Activated naive CD4-positive, alpha-beta T cell treated with anti-CD3 and anti-CD28 coated beads for 36 hours (primary cell): ENCODE measurements at regions of chr11 and their contacts with region 1.

Region 1: GRCh38 chr11:269146-269890 is 8.9 kb upstream of the NLRP6 start:
- DNase-seq: peak; percentile 80
- H3K4me3 Mint-ChIP-seq: peak overlapping the region; percentile 89
- H3K27ac Mint-ChIP-seq: peak overlapping the region; percentile 99
- H3K4me1 Mint-ChIP-seq: peaks cover 36% of the 10 kb centered on the region
- H3K27me3 Mint-ChIP-seq: no peaks in the 10 kb centered on the region

Region 2: DNA sequence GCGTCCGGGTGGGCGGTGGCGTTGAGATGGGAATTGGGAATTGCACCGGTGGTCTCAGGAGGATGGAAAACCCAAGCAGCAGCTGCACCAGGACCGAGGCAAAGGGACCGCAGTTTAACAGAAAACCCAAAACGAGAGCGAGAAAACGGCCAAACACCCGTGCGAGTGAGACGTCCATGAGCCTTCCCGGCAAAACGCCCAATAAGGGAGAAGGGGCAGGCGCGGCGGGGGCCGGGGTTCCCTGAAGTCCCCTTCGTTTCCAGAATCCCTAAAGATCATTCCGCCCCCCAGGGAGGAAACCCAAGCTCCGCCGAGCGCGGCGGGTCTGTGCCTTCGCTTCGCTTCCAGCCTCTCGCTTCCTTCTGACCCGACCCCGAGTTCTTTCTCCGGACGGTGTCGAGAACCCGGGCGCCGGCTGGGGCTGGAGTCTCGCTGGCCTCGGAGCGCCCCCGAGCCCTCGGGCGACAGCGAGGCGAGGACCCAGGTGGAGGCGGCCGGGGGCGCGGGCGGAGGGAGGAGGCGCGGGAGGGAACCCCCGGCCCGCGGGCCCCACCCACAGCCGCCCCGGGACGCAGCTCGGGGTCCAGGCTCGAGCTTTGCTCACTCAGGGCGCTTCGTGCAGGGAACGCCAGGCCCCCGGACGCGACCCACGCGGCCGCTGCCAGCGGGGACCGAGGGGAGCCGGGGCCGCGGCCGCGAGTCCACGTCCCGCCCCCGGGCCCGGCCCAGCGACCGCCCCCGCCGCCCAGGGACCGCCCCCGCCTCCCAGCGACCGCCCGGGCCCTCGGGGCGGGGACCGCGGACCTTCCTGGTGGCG is 19.2 kb after region 1 on chr11 and contains the start of gene PGGHG:
- CTCF ChIA-PET with region 1: no interaction called
- intact Hi-C with region 1: loop called (anchors 1 kb)
- DNase-seq: peak; percentile 36
- H3K4me3 Mint-ChIP-seq: peak within 1 kb of the TSS; percentile 98
- H3K27ac Mint-ChIP-seq: peak within 1 kb of the TSS; percentile 97
- H3K4me1 Mint-ChIP-seq: peaks cover 38% of the 10 kb centered on the region
- H3K27me3 Mint-ChIP-seq: peaks cover 2% of the 10 kb centered on the region
- total RNA-seq, gene PGGHG: 99.6 to 101 TPM

Region 3: GRCh38 chr11:326842-327580 is 57.7 kb after region 1 on chr11:
- CTCF ChIA-PET with region 1: no interaction called
- intact Hi-C with region 1: loop called (anchors 1 kb)
- DNase-seq: peak; percentile 92
- H3K4me3 Mint-ChIP-seq: peak overlapping the region; percentile 72
- H3K27ac Mint-ChIP-seq: peak overlapping the region; percentile 98
- H3K4me1 Mint-ChIP-seq: peaks cover 73% of the 10 kb centered on the region
- H3K27me3 Mint-ChIP-seq: no peaks in the 10 kb centered on the region

Region 4: GRCh38 chr11:406978-407739 is 137.8 kb after region 1 on chr11:
- CTCF ChIA-PET with region 1: no interaction called
- intact Hi-C with region 1: loop called (anchors 2 kb)
- DNase-seq: peak; percentile 91
- H3K4me3 Mint-ChIP-seq: peak overlapping the region; percentile 58
- H3K27ac Mint-ChIP-seq: no peak overlapping the region
- H3K4me1 Mint-ChIP-seq: peaks cover 2% of the 10 kb centered on the region
- H3K27me3 Mint-ChIP-seq: no peaks in the 10 kb centered on the region